A549 (cell line): ENCODE measurements at regions of chr12 and their contacts with region 1.

Region 1: GRCh38 chr12:116708826-116709756 is 28.8 kb downstream of the SPRING1 start:
- DNase-seq: peak; percentile 65 to 74
- ATAC-seq: peak; percentile 95 to 96
- H3K4me3 ChIP-seq: peak overlapping the region; percentile 17; the same call in 1 of the 3 replicates
- H3K27ac ChIP-seq: peak overlapping the region in 1 of 2 experiments; percentile 49; a peak in 3 of 6 replicates
- H3K4me1 ChIP-seq: peaks cover 10% of the 10 kb centered on the region; the same call in 1 of the 3 replicates
- CTCF ChIP-seq: peak; percentile 82
- EP300 ChIP-seq: no peak
- POLR2A ChIP-seq: no peak
- RAD21 ChIP-seq: peak; percentile 93 to 96

Region 2: DNA sequence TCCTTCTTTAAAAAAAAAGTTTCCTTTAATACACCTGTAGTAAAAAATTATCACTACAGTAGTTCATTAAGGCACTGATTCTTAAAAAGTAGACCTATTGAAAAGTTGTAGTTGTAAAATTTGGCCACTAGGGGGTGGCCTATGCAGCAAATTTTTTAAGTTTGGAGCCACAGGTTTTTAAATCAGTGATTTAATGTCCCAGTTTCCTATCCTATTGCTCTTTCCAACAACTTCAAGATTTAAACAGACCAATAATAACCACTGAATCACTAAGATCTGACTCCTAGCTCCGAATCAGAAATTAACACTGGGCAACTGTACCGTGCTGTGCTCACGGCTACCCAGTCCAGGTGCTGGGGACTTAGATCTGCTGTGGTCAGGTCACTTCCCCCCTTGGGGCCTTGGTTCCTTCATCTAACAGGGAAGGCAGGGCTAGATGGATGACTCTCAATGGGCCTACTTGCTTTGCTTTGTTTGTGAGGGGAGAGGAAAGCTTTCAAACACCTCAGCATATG is 710.9 kb before region 1 on chr12:
- CTCF ChIA-PET with region 1: interaction called, 13 read pairs
- POLR2A ChIA-PET with region 1: no interaction called
- DNase-seq: peak; percentile 45 to 56
- ATAC-seq: peak; percentile 50 to 71; a peak in 4 of 6 replicates
- H3K4me3 ChIP-seq: no peak overlapping the region
- H3K27ac ChIP-seq: peak overlapping the region in 1 of 2 experiments; percentile 30; a peak in 1 of 6 replicates
- H3K4me1 ChIP-seq: 0 out of 3 replicates have a peak, but pooled peaks cover 5% of the 10 kb centered on the region
- CTCF ChIP-seq: peak; percentile 88
- EP300 ChIP-seq: no peak
- POLR2A ChIP-seq: no peak
- RAD21 ChIP-seq: peak; percentile 73 to 77

Region 3: GRCh38 chr12:116673681-116674111 is 35.4 kb before region 1 on chr12:
- CTCF ChIA-PET with region 1: interaction called, 10 read pairs
- POLR2A ChIA-PET with region 1: no interaction called
- DNase-seq: peak in 1 of 2 experiments; percentile 54
- ATAC-seq: peak in 1 of 2 experiments; percentile 71; a peak in 3 of 6 replicates
- H3K4me3 ChIP-seq: no peak overlapping the region
- H3K27ac ChIP-seq: no peak overlapping the region
- H3K4me1 ChIP-seq: peaks cover 9% of the 10 kb centered on the region
- CTCF ChIP-seq: peak; percentile 48
- EP300 ChIP-seq: no peak
- POLR2A ChIP-seq: no peak
- RAD21 ChIP-seq: peak; percentile 43 to 64; a peak in 4 of 5 replicates

Region 4: DNA sequence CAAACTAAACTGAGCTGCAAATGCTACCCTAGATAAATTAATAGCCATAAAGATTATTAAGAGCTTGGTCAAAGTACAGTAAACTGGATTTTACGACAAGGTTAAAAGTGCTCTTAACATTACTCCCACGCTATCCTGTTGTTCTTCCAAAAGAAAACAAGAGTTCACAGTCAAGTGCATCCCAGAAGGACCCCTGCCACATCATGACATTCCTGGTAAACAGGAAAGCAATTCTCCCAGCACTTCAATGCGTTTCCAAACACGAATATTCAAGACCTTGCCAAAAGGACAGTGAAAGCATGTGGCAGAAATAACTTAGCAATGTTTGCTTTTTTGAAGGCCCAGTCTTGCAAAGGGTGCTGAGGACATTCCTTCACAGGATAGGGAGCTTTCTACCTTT is 17.6 kb after region 1 on chr12:
- CTCF ChIA-PET with region 1: interaction called, 20 read pairs
- POLR2A ChIA-PET with region 1: no interaction called
- DNase-seq: no peak
- ATAC-seq: no peak
- H3K4me3 ChIP-seq: no peak overlapping the region
- H3K27ac ChIP-seq: no peak overlapping the region
- H3K4me1 ChIP-seq: no peaks in the 10 kb centered on the region
- CTCF ChIP-seq: no peak
- EP300 ChIP-seq: no peak
- POLR2A ChIP-seq: no peak
- RAD21 ChIP-seq: no peak